MCF 10A (cell line): ENCODE measurements at regions of chr2 and their contacts with region 1.

Region 1: DNA sequence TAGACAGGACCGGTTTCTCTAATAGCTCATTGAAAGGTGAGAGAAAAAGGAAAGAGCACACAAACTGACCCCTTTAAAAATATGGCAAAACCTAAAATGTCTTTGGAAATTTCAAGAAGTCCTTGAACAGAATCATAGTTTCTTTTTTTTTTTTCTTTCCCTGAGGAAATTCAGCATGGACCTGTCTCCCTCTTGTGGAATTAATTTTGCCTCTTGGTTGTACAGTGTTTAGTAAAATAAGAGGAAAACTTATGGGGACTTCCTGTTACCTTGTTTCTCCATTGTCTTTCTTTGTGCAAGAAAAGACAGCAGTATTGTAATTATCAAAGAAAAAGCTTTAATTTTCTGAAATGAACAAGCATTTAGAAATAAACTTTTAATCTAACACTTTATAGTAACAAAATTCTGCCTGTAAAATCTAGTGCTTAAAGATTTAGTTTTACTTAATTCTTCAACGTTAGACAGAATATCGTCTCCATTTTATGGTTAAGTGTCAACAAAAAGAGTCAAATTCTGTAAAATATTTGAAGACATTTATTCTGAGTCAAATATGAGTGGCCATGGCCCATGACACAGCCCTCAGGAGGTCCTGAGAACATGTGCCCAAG is 176.3 kb upstream of the NABP1 start:
- DNase-seq: peak; percentile 51
- H3K4me3 Mint-ChIP-seq: no peak overlapping the region
- H3K27ac Mint-ChIP-seq: no peak overlapping the region
- H3K4me1 Mint-ChIP-seq: no peaks in the 10 kb centered on the region
- H3K27me3 Mint-ChIP-seq: no peaks in the 10 kb centered on the region
- CTCF ChIP-seq: peak; percentile 58

Region 2: DNA sequence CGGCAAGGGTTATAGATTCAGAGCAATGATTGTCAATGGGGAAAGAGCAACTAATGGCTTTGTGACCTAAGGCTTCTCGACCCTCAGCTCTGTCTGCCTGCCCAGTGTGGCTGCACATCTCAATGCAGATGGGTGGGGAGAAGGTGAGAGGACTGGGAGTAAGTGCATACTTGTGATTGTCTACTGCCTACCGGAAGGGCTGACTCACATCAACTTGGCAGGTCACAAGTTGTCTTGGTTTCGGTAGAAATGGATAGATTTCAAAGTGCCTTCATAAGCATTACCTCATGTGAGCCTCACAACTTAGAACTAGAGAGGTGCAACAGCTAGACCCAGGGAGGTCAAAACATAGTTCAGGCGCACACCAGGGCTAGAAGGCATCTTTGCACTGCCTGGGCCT is 517.1 kb before region 1 on chr2:
- CTCF ChIA-PET with region 1: no interaction called
- POLR2A ChIA-PET with region 1: no interaction called
- intact Hi-C with region 1: no loop called
- DNase-seq: peak; percentile 83
- H3K4me3 Mint-ChIP-seq: no peak overlapping the region
- H3K27ac Mint-ChIP-seq: no peak overlapping the region
- H3K4me1 Mint-ChIP-seq: peaks cover 7% of the 10 kb centered on the region
- H3K27me3 Mint-ChIP-seq: no peaks in the 10 kb centered on the region
- CTCF ChIP-seq: no peak

Region 3: GRCh38 chr2:191038241-191038725 is 463.4 kb before region 1 on chr2:
- CTCF ChIA-PET with region 1: interaction called, 10 read pairs
- POLR2A ChIA-PET with region 1: no interaction called
- intact Hi-C with region 1: no loop called
- DNase-seq: peak; percentile 35
- H3K4me3 Mint-ChIP-seq: no peak overlapping the region
- H3K27ac Mint-ChIP-seq: peak overlapping the region; percentile 74
- H3K4me1 Mint-ChIP-seq: peaks cover 19% of the 10 kb centered on the region
- H3K27me3 Mint-ChIP-seq: no peaks in the 10 kb centered on the region
- CTCF ChIP-seq: no peak

Region 4: GRCh38 chr2:191165176-191165643 is 336.5 kb before region 1 on chr2:
- CTCF ChIA-PET with region 1: interaction called, 222 read pairs
- POLR2A ChIA-PET with region 1: interaction called, 14 read pairs
- intact Hi-C with region 1: loop called (anchors 1 kb)
- DNase-seq: peak; percentile 71
- H3K4me3 Mint-ChIP-seq: no peak overlapping the region
- H3K27ac Mint-ChIP-seq: no peak overlapping the region
- H3K4me1 Mint-ChIP-seq: peaks cover 36% of the 10 kb centered on the region
- H3K27me3 Mint-ChIP-seq: no peaks in the 10 kb centered on the region
- CTCF ChIP-seq: peak; percentile 51

Region 5: GRCh38 chr2:191218292-191218898 is 283.3 kb before region 1 on chr2:
- CTCF ChIA-PET with region 1: interaction called, 42 read pairs
- POLR2A ChIA-PET with region 1: no interaction called
- intact Hi-C with region 1: loop called (anchors 1 kb)
- DNase-seq: peak; percentile 87
- H3K4me3 Mint-ChIP-seq: no peak overlapping the region
- H3K27ac Mint-ChIP-seq: peak overlapping the region; percentile 82
- H3K4me1 Mint-ChIP-seq: peaks cover 38% of the 10 kb centered on the region
- H3K27me3 Mint-ChIP-seq: no peaks in the 10 kb centered on the region
- CTCF ChIP-seq: peak; percentile 51

Region 6: GRCh38 chr2:191412353-191412752 is 89.3 kb before region 1 on chr2:
- CTCF ChIA-PET with region 1: interaction called, 11 read pairs
- POLR2A ChIA-PET with region 1: interaction called, 3 read pairs
- intact Hi-C with region 1: no loop called
- DNase-seq: no peak
- H3K4me3 Mint-ChIP-seq: no peak overlapping the region
- H3K27ac Mint-ChIP-seq: no peak overlapping the region
- H3K4me1 Mint-ChIP-seq: no peaks in the 10 kb centered on the region
- H3K27me3 Mint-ChIP-seq: no peaks in the 10 kb centered on the region
- CTCF ChIP-seq: no peak

Region 7: GRCh38 chr2:191515551-191515950 is 13.9 kb after region 1 on chr2:
- CTCF ChIA-PET with region 1: interaction called, 64 read pairs
- POLR2A ChIA-PET with region 1: interaction called, 4 read pairs
- intact Hi-C with region 1: no loop called
- DNase-seq: no peak
- H3K4me3 Mint-ChIP-seq: no peak overlapping the region
- H3K27ac Mint-ChIP-seq: no peak overlapping the region
- H3K4me1 Mint-ChIP-seq: no peaks in the 10 kb centered on the region
- H3K27me3 Mint-ChIP-seq: no peaks in the 10 kb centered on the region
- CTCF ChIP-seq: no peak

Region 8: GRCh38 chr2:191545361-191545760 is 43.7 kb after region 1 on chr2:
- CTCF ChIA-PET with region 1: no interaction called
- POLR2A ChIA-PET with region 1: no interaction called
- intact Hi-C with region 1: no loop called
- DNase-seq: no peak
- H3K4me3 Mint-ChIP-seq: no peak overlapping the region
- H3K27ac Mint-ChIP-seq: no peak overlapping the region
- H3K4me1 Mint-ChIP-seq: no peaks in the 10 kb centered on the region
- H3K27me3 Mint-ChIP-seq: no peaks in the 10 kb centered on the region
- CTCF ChIP-seq: no peak

Region 9: DNA sequence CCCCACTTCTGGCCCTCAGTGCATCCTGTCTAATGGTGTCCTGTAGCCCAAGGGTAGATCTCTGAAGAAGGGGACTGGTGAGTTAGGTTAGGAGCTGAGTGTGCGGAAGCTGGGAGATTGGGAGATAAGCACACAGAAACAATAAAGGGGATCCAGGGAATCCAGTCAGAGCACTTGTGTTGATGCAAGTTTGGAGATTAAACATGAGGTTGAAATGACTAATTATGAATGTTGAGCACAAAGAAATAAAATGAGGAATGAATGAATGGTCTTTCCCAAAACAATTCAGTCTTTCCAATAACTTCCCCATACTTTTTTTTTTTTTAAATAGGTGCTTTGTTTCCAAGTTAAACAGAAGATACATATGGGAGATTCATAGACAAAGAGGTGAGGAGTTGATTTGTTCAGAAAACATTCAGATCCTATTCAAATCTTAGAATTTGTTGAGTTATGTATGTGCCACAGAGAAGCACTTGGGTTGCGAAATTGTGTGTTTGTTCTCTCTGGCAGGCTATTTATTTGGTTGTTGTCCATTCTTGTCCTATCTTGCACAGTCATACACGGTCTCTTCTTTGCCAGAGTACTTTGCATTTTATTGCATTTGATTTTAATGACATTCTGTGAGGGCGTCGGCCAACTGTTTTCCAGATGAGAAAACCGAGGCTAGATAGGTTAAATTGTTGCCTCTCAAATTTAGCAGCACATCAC is 144.7 kb after region 1 on chr2:
- CTCF ChIA-PET with region 1: no interaction called
- POLR2A ChIA-PET with region 1: no interaction called
- intact Hi-C with region 1: no loop called
- DNase-seq: peak; percentile 74
- H3K4me3 Mint-ChIP-seq: no peak overlapping the region
- H3K27ac Mint-ChIP-seq: peak overlapping the region; percentile 83
- H3K4me1 Mint-ChIP-seq: peaks cover 26% of the 10 kb centered on the region
- H3K27me3 Mint-ChIP-seq: no peaks in the 10 kb centered on the region
- CTCF ChIP-seq: no peak